CD8-positive, alpha-beta T cell (primary cell): ENCODE measurements at regions of chr17 and their contacts with region 1.

Region 1: DNA sequence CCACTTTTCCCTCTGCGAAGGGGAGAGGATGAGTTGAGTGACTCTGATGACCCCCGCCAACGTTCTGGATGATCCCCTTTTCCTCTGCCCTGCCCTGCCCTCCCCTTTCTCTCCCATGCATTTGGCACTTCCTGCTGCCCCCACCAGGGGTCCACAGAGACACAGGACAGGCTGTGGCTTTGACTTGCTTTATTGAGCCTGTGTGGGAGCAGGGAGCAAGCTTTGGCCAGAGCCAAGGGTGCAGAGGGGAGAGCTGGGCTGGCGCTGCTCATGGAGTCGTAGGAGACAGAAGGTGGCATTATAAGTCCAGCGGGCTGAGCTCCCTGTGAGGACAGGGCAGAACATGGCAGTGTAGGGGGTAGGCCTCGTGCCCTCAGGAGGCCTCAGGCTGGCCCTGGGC is 1.6 kb downstream of the PPY start:
- DNase-seq: peak in 2 of 9 experiments; percentile 24 to 32
- ATAC-seq: no peak
- H3K4me3 ChIP-seq: no peak overlapping the region
- H3K4me3 Mint-ChIP-seq: no peak overlapping the region
- H3K27ac ChIP-seq: no peak overlapping the region
- H3K27ac Mint-ChIP-seq: no peak overlapping the region
- H3K4me1 ChIP-seq: peaks cover 12% of the 10 kb centered on the region
- H3K4me1 Mint-ChIP-seq: peaks cover 14% of the 10 kb centered on the region
- H3K27me3 ChIP-seq: no peaks in the 10 kb centered on the region
- H3K27me3 Mint-ChIP-seq: peaks cover 4% of the 10 kb centered on the region
- CTCF ChIP-seq: no peak

Region 2: GRCh38 chr17:43994272-43995149 is 53.9 kb after region 1 on chr17:
- CTCF ChIA-PET with region 1: interaction called, 22 read pairs
- POLR2A ChIA-PET with region 1: no interaction called
- intact Hi-C with region 1: loop called (anchors 1 kb)
- DNase-seq: peak; percentile 31 to 75 (median 65)
- ATAC-seq: peak; percentile 98
- H3K4me3 ChIP-seq: peak overlapping the region in 1 of 2 experiments; percentile 32
- H3K4me3 Mint-ChIP-seq: no peak overlapping the region
- H3K27ac ChIP-seq: no peak overlapping the region
- H3K27ac Mint-ChIP-seq: no peak overlapping the region
- H3K4me1 ChIP-seq: peaks cover 5% of the 10 kb centered on the region
- H3K4me1 Mint-ChIP-seq: peaks cover 3% of the 10 kb centered on the region
- H3K27me3 ChIP-seq: peaks cover 7 to 9% of the 10 kb centered on the region in 2 experiments
- H3K27me3 Mint-ChIP-seq: peaks cover 19% of the 10 kb centered on the region
- CTCF ChIP-seq: peak; percentile 93

Region 3: DNA sequence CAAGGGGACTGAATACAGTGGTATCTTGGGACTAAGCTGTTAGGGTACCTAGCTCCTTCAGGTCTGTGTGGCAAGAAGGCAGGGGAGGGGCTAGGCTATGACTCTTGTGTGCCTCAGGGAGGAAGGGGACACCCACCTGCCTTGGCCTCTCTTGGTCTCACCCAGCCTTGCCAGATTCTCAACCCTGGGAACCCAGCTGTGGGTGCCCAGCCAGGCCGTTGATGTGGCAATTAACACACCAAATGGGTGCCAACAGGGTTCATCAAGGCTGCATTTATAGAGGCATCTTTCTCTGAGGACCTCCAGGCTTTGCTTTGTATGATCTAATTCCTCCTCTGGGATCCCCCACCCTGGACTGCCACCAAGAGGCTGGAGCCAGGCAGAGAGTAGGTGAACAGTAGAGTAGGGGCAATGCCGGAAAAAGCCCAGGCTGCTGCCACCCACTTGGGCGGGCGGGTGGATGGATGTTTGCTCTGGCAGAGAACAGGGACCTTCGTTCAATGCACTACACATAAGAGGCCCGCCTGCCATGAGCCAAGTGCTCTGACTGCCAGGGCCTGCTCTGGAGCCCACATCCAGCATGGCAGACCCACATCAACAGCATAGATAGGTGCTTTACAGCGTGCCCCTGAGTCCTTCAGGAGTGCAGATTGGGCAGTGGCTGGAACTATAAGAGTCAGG is 226.7 kb after region 1 on chr17:
- CTCF ChIA-PET with region 1: interaction called, 6 read pairs
- POLR2A ChIA-PET with region 1: no interaction called
- intact Hi-C with region 1: loop called in 1 of 2 experiments (anchors 5 kb)
- DNase-seq: no peak
- ATAC-seq: no peak
- H3K4me3 ChIP-seq: no peak overlapping the region
- H3K4me3 Mint-ChIP-seq: no peak overlapping the region
- H3K27ac ChIP-seq: no peak overlapping the region
- H3K27ac Mint-ChIP-seq: no peak overlapping the region
- H3K4me1 ChIP-seq: peaks cover 4% of the 10 kb centered on the region
- H3K4me1 Mint-ChIP-seq: peaks cover 9% of the 10 kb centered on the region
- H3K27me3 ChIP-seq: no peaks in the 10 kb centered on the region
- H3K27me3 Mint-ChIP-seq: no peaks in the 10 kb centered on the region
- CTCF ChIP-seq: no peak